ENCODE measurements at regions of chr17 and their contacts with region 1.

Region 1: GRCh38 chr17:29568331-29569244 is at the start of gene TP53I13:
- DNase-seq: peak; percentile 96
- ATAC-seq: peak; percentile 64
- H3K4me3 Mint-ChIP-seq: peak within 1 kb of the TSS; percentile 97
- H3K27ac Mint-ChIP-seq: peak within 1 kb of the TSS; percentile 96
- H3K4me1 Mint-ChIP-seq: peaks cover 30% of the 10 kb centered on the region
- H3K27me3 Mint-ChIP-seq: no peaks in the 10 kb centered on the region
- total RNA-seq, gene TP53I13: 37.7 to 41.5 TPM

Region 2: DNA sequence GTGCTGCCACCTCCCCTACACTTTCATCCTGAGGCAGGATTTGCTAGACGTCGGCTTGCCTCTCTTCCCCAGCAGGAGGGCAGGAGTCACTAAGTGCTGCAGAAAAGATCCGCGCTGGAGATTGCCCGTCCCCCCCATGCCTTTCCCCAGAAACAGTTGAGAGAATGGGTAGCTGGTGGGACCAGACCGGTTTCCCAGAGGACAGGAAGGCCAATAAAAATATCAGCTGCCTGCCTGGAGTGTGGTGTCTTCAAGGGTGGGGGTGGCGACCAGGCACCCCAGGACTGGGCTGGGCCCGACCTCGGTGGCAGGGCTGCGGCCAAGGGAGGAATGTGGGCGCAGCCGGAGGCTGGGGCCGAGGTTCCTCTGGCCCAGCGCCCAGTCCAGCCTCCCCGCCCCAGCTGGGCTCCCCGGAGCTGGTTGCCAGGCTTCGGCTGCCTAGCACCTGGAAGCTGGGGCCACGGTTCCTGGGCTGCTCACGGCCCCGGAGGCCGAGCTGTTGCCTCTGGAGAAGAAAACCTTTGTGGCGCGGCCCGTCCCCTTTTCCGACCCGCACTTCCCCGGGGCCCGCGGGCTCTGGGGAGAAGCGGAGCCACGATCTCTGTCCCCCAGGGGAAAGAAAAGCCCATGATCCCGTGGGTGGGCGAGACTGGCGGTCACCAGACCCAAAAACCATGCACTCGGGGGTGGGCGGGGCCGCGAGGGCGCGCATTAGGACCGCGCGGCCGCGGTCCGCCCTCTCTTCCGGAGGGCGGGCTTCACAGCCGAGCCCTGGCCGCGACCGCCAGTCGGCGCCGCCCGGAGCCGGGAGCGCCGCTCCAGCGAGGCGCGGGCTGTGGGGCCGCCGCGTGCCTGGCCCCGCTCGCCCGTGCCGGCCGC is 825.1 kb before region 1 on chr17 and contains the start of gene TRAF4:
- CTCF ChIA-PET with region 1: no interaction called
- POLR2A ChIA-PET with region 1: no interaction called
- intact Hi-C with region 1: loop called in 1 of 2 experiments (anchors 5 kb)
- DNase-seq: peak; percentile 89
- ATAC-seq: peak; percentile 91
- H3K4me3 Mint-ChIP-seq: peak within 1 kb of the TSS; percentile 87
- H3K27ac Mint-ChIP-seq: peak within 1 kb of the TSS; percentile 92
- H3K4me1 Mint-ChIP-seq: peaks cover 42% of the 10 kb centered on the region
- H3K27me3 Mint-ChIP-seq: no peaks in the 10 kb centered on the region
- total RNA-seq, gene TRAF4: 96.5 to 117 TPM

Region 3: DNA sequence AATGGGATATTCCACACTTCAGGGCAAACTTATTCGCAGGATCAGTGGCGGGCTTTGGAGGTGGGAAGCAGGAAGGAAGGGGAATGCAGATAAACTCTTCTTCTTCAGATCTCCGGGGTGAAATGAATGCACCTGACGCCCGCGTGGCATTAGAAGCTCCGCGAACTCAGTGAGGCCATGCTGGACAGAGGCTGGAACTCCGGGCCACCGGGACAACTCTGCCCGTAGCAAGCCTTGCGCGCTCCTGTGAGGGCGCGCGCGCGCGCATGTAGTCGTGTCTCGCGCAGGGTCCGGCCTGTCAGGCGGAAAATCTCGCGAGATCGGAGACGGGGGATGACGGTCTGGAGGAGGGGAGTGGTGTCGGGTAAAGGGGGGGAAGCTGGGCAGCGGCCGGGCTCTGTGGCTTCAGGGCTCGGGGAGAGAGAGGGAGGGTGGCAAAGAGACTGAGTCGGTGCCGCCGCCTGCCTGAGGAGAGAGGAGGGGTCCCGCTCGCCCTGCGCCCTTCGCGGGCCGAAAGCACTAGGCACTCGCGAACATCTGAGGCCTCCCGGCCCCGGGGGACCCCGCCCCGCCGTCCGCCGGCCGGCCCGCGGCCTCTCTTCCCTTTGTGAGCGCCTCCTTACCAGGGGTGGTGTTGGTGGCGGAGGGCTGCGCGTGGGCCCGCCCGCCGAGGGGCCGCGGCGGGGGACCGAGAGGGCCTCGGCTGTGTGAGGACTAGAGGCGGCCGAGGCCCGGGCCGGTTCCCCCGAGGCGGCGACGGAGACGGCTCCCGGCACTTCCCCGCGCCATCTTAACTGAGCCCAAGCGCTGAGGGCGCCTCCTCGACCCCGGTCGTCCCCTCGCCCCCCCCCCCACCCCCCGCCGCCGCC is 178.4 kb before region 1 on chr17 and contains the start of gene TAOK1:
- CTCF ChIA-PET with region 1: no interaction called
- POLR2A ChIA-PET with region 1: no interaction called
- intact Hi-C with region 1: loop called (anchors 1 to 2 kb)
- DNase-seq: peak; percentile 99
- ATAC-seq: peak; percentile 95
- H3K4me3 Mint-ChIP-seq: peak within 1 kb of the TSS; percentile 81
- H3K27ac Mint-ChIP-seq: peak within 1 kb of the TSS; percentile 94
- H3K4me1 Mint-ChIP-seq: peaks cover 36% of the 10 kb centered on the region
- H3K27me3 Mint-ChIP-seq: no peaks in the 10 kb centered on the region
- total RNA-seq, gene TAOK1: 29.9 to 35.1 TPM

Region 4: GRCh38 chr17:29589524-29590410 is 21.2 kb after region 1 on chr17 and contains the start of gene GIT1:
- CTCF ChIA-PET with region 1: interaction called, 22 read pairs
- POLR2A ChIA-PET with region 1: interaction called, 3 read pairs
- intact Hi-C with region 1: loop called (anchors 1 to 2 kb)
- DNase-seq: peak; percentile 92
- ATAC-seq: peak; percentile 69
- H3K4me3 Mint-ChIP-seq: peak within 1 kb of the TSS; percentile 94
- H3K27ac Mint-ChIP-seq: peak within 1 kb of the TSS; percentile 92
- H3K4me1 Mint-ChIP-seq: peaks cover 64% of the 10 kb centered on the region
- H3K27me3 Mint-ChIP-seq: no peaks in the 10 kb centered on the region
- total RNA-seq, gene GIT1: 60.5 to 74.1 TPM

Region 5: DNA sequence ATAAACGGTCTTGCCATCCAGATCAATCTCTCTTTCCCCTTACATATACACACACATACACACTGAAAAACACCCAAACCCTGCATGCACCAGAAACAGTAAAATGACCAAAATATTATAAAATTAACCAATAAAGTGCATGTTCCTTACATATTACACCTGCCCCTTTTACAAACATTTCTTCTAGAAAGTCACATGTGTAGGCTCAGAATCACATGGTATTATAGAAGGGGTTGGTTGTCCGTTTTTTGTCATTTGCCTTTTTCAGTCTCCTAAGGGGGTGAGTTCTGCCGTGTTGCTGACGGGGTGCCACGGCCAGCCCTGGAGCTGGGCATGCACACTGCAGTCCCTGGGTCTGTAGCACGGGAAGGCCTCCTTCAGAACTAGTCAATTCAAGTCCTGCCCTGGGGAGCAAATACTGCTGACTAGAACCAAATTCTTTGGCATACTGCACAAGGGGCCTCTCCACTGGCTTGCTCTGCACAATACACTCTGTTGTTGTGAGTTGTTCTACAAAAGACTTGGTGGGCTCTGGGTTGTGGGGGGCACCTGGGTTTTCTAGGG is 62.1 kb after region 1 on chr17:
- CTCF ChIA-PET with region 1: no interaction called
- POLR2A ChIA-PET with region 1: no interaction called
- intact Hi-C with region 1: no loop called
- DNase-seq: no peak
- ATAC-seq: no peak
- H3K4me3 Mint-ChIP-seq: no peak overlapping the region
- H3K27ac Mint-ChIP-seq: no peak overlapping the region
- H3K4me1 Mint-ChIP-seq: peaks cover 37% of the 10 kb centered on the region
- H3K27me3 Mint-ChIP-seq: no peaks in the 10 kb centered on the region

Region 6: GRCh38 chr17:29664743-29665480 is 96.3 kb after region 1 on chr17:
- CTCF ChIA-PET with region 1: no interaction called
- POLR2A ChIA-PET with region 1: no interaction called
- intact Hi-C with region 1: no loop called
- DNase-seq: peak; percentile 18
- ATAC-seq: peak; percentile 94
- H3K4me3 Mint-ChIP-seq: no peak overlapping the region
- H3K27ac Mint-ChIP-seq: peak overlapping the region; percentile 85
- H3K4me1 Mint-ChIP-seq: peaks cover 32% of the 10 kb centered on the region
- H3K27me3 Mint-ChIP-seq: no peaks in the 10 kb centered on the region

Region 7: DNA sequence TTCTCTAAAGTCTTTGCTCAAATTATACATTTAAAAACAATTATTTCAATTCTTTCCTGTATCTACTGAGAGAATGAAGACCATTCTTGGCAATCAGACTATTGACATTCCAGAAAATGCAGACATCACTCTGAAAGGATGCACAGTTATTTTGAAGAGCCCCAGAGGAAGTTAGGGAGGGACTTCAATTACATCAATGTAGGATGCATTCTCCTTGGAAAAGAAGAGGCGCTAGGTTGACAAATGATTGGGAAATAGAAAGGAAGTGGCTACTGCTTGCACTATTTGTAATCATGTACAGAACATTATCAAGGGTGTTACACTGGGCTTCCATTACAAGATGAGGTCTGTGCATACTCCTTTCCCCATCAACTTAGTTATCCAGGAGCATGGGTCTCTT is 287.1 kb after region 1 on chr17:
- CTCF ChIA-PET with region 1: no interaction called
- POLR2A ChIA-PET with region 1: no interaction called
- intact Hi-C with region 1: no loop called
- DNase-seq: no peak
- ATAC-seq: no peak
- H3K4me3 Mint-ChIP-seq: no peak overlapping the region
- H3K27ac Mint-ChIP-seq: no peak overlapping the region
- H3K4me1 Mint-ChIP-seq: peaks cover 5% of the 10 kb centered on the region
- H3K27me3 Mint-ChIP-seq: no peaks in the 10 kb centered on the region

Measured in activated CD4-positive, alpha-beta T cell treated with anti-CD3 and anti-CD28 coated beads for 36 hours (primary cell).